WTC11 (cell line): ENCODE measurements at regions of chr1 and their contacts with region 1.

Region 1: GRCh38 chr1:201703621-201704439 is 125.1 kb upstream of the IPO9 start:
- DNase-seq: peak; percentile 92
- ATAC-seq: peak; percentile 88
- H3K4me3 Mint-ChIP-seq: no peak overlapping the region
- H3K27ac Mint-ChIP-seq: no peak overlapping the region
- H3K4me1 Mint-ChIP-seq: peaks cover 25% of the 10 kb centered on the region
- H3K27me3 Mint-ChIP-seq: no peaks in the 10 kb centered on the region
- CTCF ChIP-seq: peak; percentile 93

Region 2: DNA sequence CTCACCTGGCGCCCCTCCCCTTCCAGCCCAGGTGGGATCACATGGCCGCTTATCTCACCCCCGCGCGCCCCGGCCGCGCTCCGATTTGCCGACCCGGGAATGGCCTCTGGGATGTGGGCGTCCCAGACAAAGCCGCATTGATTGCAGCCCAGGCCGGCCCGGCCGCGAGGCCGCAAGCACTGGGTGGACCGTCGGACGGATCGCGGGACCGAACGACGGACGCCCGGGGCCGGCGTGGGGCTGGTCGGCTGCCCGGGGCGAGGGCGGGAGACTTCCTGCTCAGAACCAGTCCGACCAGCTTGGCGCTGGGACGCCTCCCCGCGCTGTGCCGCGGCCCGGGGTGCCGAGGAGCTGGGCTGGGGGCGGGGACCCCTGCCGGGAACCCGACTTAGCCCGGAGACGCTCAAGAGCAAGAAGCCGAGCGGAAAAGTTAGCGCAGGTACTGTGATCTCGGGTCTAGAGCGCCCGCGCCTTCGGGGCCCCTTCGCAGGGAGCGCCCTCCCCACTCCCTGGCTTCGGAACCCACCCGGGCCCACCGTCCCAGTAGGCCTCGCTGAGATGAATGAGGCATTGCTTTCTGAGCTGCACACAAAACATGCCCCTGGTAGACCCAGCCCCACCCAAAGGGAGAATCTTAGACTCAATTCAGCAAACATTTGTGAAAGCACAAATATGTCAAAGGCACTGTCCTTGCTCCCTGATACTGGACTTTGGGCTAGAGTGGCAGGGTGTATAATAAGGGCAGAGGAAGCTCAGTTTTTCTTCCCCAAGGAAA is 304.3 kb before region 1 on chr1:
- CTCF ChIA-PET with region 1: no interaction called
- POLR2A ChIA-PET with region 1: no interaction called
- DNase-seq: peak; percentile 76
- ATAC-seq: peak; percentile 68
- H3K4me3 Mint-ChIP-seq: peak overlapping the region; percentile 62
- H3K27ac Mint-ChIP-seq: no peak overlapping the region
- H3K4me1 Mint-ChIP-seq: peaks cover 26% of the 10 kb centered on the region
- H3K27me3 Mint-ChIP-seq: peaks cover 8% of the 10 kb centered on the region; the same call in 1 of the 2 replicates
- CTCF ChIP-seq: no peak

Region 3: GRCh38 chr1:201566933-201567801 is 136.7 kb before region 1 on chr1:
- CTCF ChIA-PET with region 1: interaction called, 155 read pairs
- POLR2A ChIA-PET with region 1: no interaction called
- DNase-seq: no peak
- ATAC-seq: peak; percentile 28; the same call in 1 of the 2 replicates
- H3K4me3 Mint-ChIP-seq: no peak overlapping the region
- H3K27ac Mint-ChIP-seq: no peak overlapping the region
- H3K4me1 Mint-ChIP-seq: peaks cover 7% of the 10 kb centered on the region; the same call in 1 of the 2 replicates
- H3K27me3 Mint-ChIP-seq: no peaks in the 10 kb centered on the region; the same call in 1 of the 2 replicates
- CTCF ChIP-seq: no peak

Region 4: DNA sequence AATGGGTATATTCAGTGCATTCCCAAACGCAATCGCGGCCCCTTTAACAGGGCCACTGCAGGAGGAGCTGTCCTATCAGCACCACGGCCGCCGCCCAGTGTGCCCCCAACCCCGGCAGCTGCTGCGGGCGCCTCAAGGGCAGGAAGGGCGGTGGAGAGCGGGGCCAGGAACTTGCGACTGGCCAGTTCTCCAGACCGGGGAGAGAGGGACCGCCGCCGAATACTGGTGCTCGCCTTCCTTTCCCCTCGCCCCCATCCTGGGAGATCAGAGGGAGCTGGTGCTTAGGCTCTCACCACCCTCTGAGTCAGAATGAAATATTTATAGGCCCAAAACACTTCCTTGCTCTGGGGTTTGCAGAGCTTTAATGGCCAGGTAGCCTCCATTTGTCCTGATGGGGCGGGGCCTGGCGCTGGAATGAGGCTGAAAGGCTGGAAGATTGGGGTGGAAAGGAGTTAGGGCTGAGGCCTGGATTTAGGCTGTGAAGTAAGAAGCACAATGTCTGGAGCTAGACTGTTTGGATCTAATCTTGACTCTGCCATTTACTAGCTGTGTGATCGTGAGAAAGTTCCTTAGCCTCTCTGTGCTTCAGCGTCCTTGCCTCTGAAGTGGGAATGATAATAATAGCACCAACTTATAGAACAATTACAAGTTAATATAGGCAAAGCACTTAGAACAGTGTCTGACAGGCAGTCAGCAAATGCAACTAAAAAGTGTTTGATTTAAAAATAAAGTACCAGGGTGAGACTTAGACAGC is 89.4 kb before region 1 on chr1:
- CTCF ChIA-PET with region 1: interaction called, 13 read pairs
- POLR2A ChIA-PET with region 1: no interaction called
- DNase-seq: peak; percentile 89
- ATAC-seq: peak; percentile 96
- H3K4me3 Mint-ChIP-seq: peak overlapping the region; percentile 66
- H3K27ac Mint-ChIP-seq: no peak overlapping the region
- H3K4me1 Mint-ChIP-seq: peaks cover 28% of the 10 kb centered on the region
- H3K27me3 Mint-ChIP-seq: peaks cover 4% of the 10 kb centered on the region
- CTCF ChIP-seq: no peak

Region 5: GRCh38 chr1:201655243-201655642 is 48.6 kb before region 1 on chr1:
- CTCF ChIA-PET with region 1: interaction called, 42 read pairs
- POLR2A ChIA-PET with region 1: no interaction called
- DNase-seq: peak; percentile 42
- ATAC-seq: peak; percentile 58
- H3K4me3 Mint-ChIP-seq: no peak overlapping the region
- H3K27ac Mint-ChIP-seq: no peak overlapping the region
- H3K4me1 Mint-ChIP-seq: peaks cover 52% of the 10 kb centered on the region
- H3K27me3 Mint-ChIP-seq: peaks cover 4% of the 10 kb centered on the region
- CTCF ChIP-seq: no peak